ENCODE measurements at regions of chr2 and their contacts with region 1.

Region 1: GRCh38 chr2:105114551-105114950 is 76.7 kb downstream of the MRPS9 start:
- DNase-seq: no peak
- H3K4me3 ChIP-seq: no peak overlapping the region
- H3K27ac ChIP-seq: no peak overlapping the region
- H3K4me1 ChIP-seq: no peaks in the 10 kb centered on the region
- H3K27me3 ChIP-seq: no peaks in the 10 kb centered on the region
- CTCF ChIP-seq: peak; percentile 51 to 80 (median 60)
- POLR2A ChIP-seq: no peak

Region 2: DNA sequence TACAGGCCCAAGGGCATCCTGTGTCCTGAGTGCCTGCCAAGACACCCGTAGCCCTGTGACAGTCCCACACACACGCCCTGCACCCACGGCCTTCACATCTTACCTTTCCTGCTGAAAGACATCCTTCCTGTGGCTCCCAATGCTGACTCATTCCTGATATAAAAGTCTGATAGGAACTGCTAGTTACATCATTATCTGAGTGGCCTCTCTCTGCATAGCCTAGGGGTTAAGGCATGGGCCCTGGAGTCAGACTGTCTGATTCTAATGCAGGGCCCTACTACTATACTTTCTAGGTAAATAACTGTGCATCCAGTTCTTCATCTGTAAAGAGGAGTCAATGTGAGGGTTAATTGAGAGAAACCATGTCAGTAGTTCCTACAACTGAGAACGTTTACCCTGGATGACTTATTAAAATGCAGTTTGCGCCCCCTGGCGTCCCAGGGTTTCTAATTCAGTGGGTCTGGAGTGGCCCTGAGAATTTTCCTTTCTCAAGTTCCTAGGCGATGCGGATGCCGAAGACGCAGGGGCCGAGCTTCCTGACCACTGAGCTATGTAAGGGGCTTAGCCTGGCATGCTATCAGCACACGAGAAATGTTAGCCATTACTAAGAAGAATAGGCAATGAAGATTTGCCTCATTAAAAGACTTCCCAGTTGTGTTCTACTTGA is 121.0 kb after region 1 on chr2:
- intact Hi-C with region 1: loop called (anchors 2 kb)
- DNase-seq: peak; percentile 8
- H3K4me3 ChIP-seq: no peak overlapping the region
- H3K27ac ChIP-seq: no peak overlapping the region
- H3K4me1 ChIP-seq: peaks cover 0 to 20% (median 0%) of the 10 kb centered on the region in 3 donors
- H3K27me3 ChIP-seq: peaks cover 0 to 17% (median 0%) of the 10 kb centered on the region in 4 donors
- CTCF ChIP-seq: peak; percentile 34 to 68 (median 58)
- POLR2A ChIP-seq: no peak